Activated naive CD4-positive, alpha-beta T cell treated with anti-CD3 and anti-CD28 coated beads for 36 hours (primary cell): ENCODE measurements at regions of chr21 and their contacts with region 1.

Region 1: GRCh38 chr21:17387030-17387617 is 125.7 kb upstream of the CXADR start:
- DNase-seq: peak; percentile 61
- H3K4me3 Mint-ChIP-seq: no peak overlapping the region
- H3K27ac Mint-ChIP-seq: no peak overlapping the region
- H3K4me1 Mint-ChIP-seq: no peaks in the 10 kb centered on the region
- H3K27me3 Mint-ChIP-seq: peaks cover 10% of the 10 kb centered on the region

Region 2: GRCh38 chr21:17554679-17555465 is 167.7 kb after region 1 on chr21:
- CTCF ChIA-PET with region 1: interaction called, 17 read pairs
- intact Hi-C with region 1: loop called (anchors 10 kb)
- DNase-seq: no peak
- H3K4me3 Mint-ChIP-seq: no peak overlapping the region
- H3K27ac Mint-ChIP-seq: no peak overlapping the region
- H3K4me1 Mint-ChIP-seq: no peaks in the 10 kb centered on the region
- H3K27me3 Mint-ChIP-seq: no peaks in the 10 kb centered on the region

Region 3: GRCh38 chr21:17679002-17679600 is 292.0 kb after region 1 on chr21:
- CTCF ChIA-PET with region 1: interaction called, 4 read pairs
- intact Hi-C with region 1: loop called (anchors 5 kb)
- DNase-seq: no peak
- H3K4me3 Mint-ChIP-seq: no peak overlapping the region
- H3K27ac Mint-ChIP-seq: no peak overlapping the region
- H3K4me1 Mint-ChIP-seq: peaks cover 11% of the 10 kb centered on the region
- H3K27me3 Mint-ChIP-seq: no peaks in the 10 kb centered on the region